MCF 10A (cell line): ENCODE measurements at regions of chr1 and their contacts with region 1.

Region 1: DNA sequence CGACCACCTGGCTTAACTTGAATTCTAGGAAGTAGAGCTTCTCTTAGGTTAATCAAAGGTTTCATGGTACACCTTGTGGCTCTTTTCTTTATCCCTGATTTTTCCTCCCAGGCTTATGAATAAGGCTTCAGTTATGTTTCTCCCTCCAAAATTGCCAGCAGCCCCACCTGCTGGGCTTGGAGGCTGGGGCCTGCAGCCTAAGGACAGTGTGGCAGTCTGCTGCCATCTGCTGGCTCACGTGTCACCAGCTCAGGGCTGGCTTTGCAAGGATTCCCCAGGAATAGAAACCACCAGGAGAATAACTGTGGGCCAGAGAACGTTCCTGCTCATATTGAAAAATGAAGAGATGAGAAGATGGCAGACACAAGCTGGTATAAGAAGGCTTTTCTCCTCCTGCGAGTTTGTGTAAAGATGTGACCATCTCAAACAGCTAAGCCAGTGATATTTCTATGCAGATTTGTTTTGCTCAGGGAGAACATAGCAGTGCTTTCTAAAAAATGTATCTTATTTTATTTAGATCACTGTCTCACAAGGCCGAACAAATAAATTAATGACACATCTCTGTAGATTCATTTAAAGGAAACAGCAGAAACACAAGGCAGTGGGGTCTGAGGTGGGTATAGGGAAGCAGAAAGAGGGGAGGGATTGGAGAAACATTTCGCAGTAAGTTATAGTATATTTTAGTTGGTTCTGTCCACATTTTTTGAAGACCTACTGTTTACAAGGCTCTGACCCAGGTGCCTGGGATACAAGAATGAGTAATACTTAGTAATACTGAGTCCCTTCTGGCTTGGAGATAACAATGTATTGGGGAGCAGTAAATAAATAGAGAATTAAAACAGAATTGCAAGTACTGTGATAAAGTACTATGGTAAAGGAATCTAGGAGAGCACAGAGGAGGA is 291.1 kb upstream of the SGIP1 start:
- DNase-seq: peak; percentile 87
- H3K4me3 Mint-ChIP-seq: no peak overlapping the region
- H3K27ac Mint-ChIP-seq: no peak overlapping the region
- H3K4me1 Mint-ChIP-seq: peaks cover 7% of the 10 kb centered on the region
- H3K27me3 Mint-ChIP-seq: peaks cover 11% of the 10 kb centered on the region
- CTCF ChIP-seq: peak; percentile 99

Region 2: GRCh38 chr1:65717815-65718454 is 525.0 kb before region 1 on chr1:
- CTCF ChIA-PET with region 1: no interaction called
- POLR2A ChIA-PET with region 1: no interaction called
- intact Hi-C with region 1: loop called (anchors 5 kb)
- DNase-seq: peak; percentile 39
- H3K4me3 Mint-ChIP-seq: no peak overlapping the region
- H3K27ac Mint-ChIP-seq: no peak overlapping the region
- H3K4me1 Mint-ChIP-seq: no peaks in the 10 kb centered on the region
- H3K27me3 Mint-ChIP-seq: peaks cover 49% of the 10 kb centered on the region
- CTCF ChIP-seq: no peak

Region 3: GRCh38 chr1:65992165-65992840 is 250.6 kb before region 1 on chr1:
- CTCF ChIA-PET with region 1: interaction called, 11 read pairs
- POLR2A ChIA-PET with region 1: no interaction called
- intact Hi-C with region 1: no loop called
- DNase-seq: no peak
- H3K4me3 Mint-ChIP-seq: no peak overlapping the region
- H3K27ac Mint-ChIP-seq: no peak overlapping the region
- H3K4me1 Mint-ChIP-seq: no peaks in the 10 kb centered on the region
- H3K27me3 Mint-ChIP-seq: peaks cover 77% of the 10 kb centered on the region
- CTCF ChIP-seq: no peak

Region 4: DNA sequence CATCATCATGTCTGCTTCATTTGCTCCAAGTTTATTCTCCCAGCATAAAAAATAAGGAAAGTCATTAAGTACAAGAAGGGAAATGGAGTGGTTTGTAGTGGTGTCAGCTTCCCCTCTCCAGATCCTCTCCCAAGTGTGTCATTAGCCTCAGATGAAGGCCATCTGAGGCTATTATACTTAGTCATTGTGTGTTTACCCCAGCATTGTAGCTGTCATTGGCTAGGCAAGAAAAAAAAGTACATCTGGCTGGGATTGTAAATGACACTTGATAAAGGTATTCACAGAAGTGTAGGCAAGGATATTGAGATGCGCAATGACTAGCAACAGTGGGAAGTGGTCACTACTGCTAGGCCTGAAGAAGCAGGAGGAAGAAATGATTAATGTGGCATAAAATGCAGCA is 25.9 kb before region 1 on chr1:
- CTCF ChIA-PET with region 1: interaction called, 12 read pairs
- POLR2A ChIA-PET with region 1: no interaction called
- intact Hi-C with region 1: no loop called
- DNase-seq: no peak
- H3K4me3 Mint-ChIP-seq: no peak overlapping the region
- H3K27ac Mint-ChIP-seq: no peak overlapping the region
- H3K4me1 Mint-ChIP-seq: no peaks in the 10 kb centered on the region
- H3K27me3 Mint-ChIP-seq: peaks cover 7% of the 10 kb centered on the region
- CTCF ChIP-seq: no peak

Region 5: DNA sequence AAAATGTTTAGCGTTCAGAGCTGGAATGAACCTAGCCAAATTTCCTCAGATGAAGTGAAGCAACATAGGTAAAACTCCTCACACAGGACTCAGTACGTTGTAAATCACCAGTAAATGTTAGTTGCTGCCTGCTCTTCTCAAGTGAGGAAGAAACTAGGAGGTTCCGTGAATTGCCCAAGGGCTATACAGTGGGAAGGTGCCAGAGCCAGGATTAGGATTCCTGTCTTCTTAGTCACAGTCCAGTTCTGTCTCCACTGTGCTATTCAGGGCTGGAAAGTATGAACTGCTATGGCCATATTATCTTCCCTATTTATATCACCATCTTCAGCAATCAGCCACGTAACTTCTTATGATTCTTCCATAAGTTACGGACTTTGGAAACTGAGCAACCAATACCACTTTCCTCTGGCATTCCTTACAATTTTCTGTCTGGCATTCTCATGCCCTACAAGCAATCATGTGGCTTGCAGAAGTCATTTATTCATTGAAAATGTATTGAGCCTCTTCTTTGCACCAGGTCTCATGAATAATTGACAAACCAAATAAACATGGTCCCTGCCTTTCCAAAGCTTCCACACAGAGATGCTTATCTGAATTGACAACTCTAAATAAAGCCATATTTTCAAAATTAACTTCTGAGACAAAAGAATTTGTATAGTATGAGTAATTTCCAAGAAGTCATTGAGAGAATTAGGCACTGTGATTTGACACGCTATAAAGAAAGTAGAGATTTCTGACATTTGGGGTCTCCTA is 19.5 kb after region 1 on chr1:
- CTCF ChIA-PET with region 1: interaction called, 10 read pairs
- POLR2A ChIA-PET with region 1: no interaction called
- intact Hi-C with region 1: no loop called
- DNase-seq: peak; percentile 96
- H3K4me3 Mint-ChIP-seq: peak overlapping the region; percentile 9
- H3K27ac Mint-ChIP-seq: peak overlapping the region; percentile 86
- H3K4me1 Mint-ChIP-seq: peaks cover 43% of the 10 kb centered on the region
- H3K27me3 Mint-ChIP-seq: no peaks in the 10 kb centered on the region
- CTCF ChIP-seq: no peak

Region 6: GRCh38 chr1:66503841-66504470 is 261.1 kb after region 1 on chr1:
- CTCF ChIA-PET with region 1: interaction called, 15 read pairs
- POLR2A ChIA-PET with region 1: no interaction called
- intact Hi-C with region 1: no loop called
- DNase-seq: peak; percentile 69
- H3K4me3 Mint-ChIP-seq: no peak overlapping the region
- H3K27ac Mint-ChIP-seq: no peak overlapping the region
- H3K4me1 Mint-ChIP-seq: no peaks in the 10 kb centered on the region
- H3K27me3 Mint-ChIP-seq: no peaks in the 10 kb centered on the region
- CTCF ChIP-seq: peak; percentile 44

Region 7: GRCh38 chr1:66563094-66563800 is 320.4 kb after region 1 on chr1:
- CTCF ChIA-PET with region 1: no interaction called
- POLR2A ChIA-PET with region 1: no interaction called
- intact Hi-C with region 1: no loop called
- DNase-seq: peak; percentile 70
- H3K4me3 Mint-ChIP-seq: no peak overlapping the region
- H3K27ac Mint-ChIP-seq: peak overlapping the region; percentile 95
- H3K4me1 Mint-ChIP-seq: peaks cover 34% of the 10 kb centered on the region
- H3K27me3 Mint-ChIP-seq: no peaks in the 10 kb centered on the region
- CTCF ChIP-seq: no peak